H1 (cell line): ENCODE measurements at regions of chr17 and their contacts with region 1.

Region 1: DNA sequence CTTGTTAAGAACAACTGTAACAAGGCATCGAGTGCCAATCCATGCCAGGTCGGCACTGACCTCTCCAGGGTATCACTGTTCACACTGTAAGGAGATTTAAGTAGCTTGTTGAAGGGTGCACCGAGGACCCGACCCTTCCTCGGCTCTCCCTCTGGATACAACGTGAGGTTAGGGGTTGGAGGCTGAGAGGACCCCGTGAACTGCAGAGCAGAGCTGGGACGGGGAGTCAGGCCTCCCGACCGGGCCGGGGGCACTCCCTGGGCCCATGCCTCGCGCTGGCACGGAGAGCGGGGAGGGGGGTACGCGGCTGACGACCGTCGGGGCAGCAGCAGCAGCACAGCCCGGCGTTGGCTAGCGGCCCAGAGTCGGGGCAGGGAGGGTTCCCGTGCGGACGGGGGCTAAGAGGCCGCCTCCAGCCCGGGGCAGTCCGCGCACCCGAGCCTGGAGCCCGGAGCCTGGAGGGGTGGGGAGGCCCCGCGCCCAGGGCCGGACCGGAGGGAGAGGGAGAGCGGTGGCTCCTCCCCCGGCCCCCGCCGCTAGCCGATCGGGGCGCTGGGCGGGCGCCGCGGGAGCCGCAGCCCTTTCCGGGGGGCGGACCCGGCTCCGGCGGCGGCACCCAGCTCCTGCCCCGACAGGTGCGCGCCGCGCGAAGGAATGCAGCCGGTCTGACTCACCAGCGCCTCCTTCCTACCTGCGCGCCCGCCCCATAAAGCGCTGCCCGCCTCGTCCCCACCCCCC is at the start of gene ITGB4:
- DNase-seq: peak; percentile 50 to 84
- H3K4me3 ChIP-seq: peak within 1 kb of the TSS; percentile 49 to 74 (median 50)
- H3K27ac ChIP-seq: no peak within 1 kb of the TSS
- H3K4me1 ChIP-seq: peaks cover 0 to 8% (median 4%) of the 10 kb centered on the region in 4 experiments; a peak in 3 of 7 replicates
- H3K27me3 ChIP-seq: peaks cover 4 to 30% (median 17%) of the 10 kb centered on the region in 4 experiments; a peak in 6 of 7 replicates
- CTCF ChIP-seq: peak in 2 of 3 experiments; percentile 1 to 33; a peak in 2 of 4 replicates
- EP300 ChIP-seq: peak in 1 of 2 experiments; percentile 26; a peak in 1 of 3 replicates
- POLR2A ChIP-seq: peak in 1 of 2 experiments; percentile 43; a peak in 1 of 3 replicates
- RAD21 ChIP-seq: no peak
- total RNA-seq, gene ITGB4: 5.4 and 5.6 TPM in 2 replicates

Region 2: DNA sequence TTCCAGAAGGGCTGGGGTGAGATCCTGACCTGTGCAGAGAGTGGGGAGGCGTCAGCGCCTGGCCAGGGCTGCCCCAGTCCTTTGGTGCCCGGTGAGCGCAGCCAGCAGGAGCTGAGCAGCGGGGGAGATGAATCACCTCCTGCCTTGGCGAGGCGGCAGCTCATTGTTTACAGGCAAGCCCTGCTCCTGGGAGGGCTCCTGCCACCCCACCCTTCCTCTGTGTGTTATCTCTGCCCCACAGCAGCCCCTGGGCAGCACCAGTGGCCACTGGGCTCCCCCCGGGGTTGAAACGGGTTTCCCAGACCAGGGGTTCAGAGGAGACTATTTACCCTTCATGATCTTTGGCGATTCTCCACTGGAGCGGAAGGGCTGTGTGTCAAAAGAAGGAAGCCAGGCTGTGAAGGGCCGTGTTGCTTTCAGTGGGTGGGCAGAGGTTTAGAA is 13.7 kb before region 1 on chr17:
- CTCF ChIA-PET with region 1: interaction called, 8 read pairs
- POLR2A ChIA-PET with region 1: interaction called, 36 read pairs
- DNase-seq: no peak
- H3K4me3 ChIP-seq: no peak overlapping the region
- H3K27ac ChIP-seq: no peak overlapping the region
- H3K4me1 ChIP-seq: no peaks in the 10 kb centered on the region
- H3K27me3 ChIP-seq: no peaks in the 10 kb centered on the region
- CTCF ChIP-seq: no peak
- EP300 ChIP-seq: no peak
- POLR2A ChIP-seq: no peak
- RAD21 ChIP-seq: no peak

Region 3: GRCh38 chr17:75731716-75732498 is 11.0 kb after region 1 on chr17:
- CTCF ChIA-PET with region 1: interaction called, 4 read pairs
- POLR2A ChIA-PET with region 1: interaction called, 11 read pairs
- DNase-seq: no peak
- H3K4me3 ChIP-seq: no peak overlapping the region
- H3K27ac ChIP-seq: no peak overlapping the region
- H3K4me1 ChIP-seq: no peaks in the 10 kb centered on the region; a peak in 2 of 7 replicates
- H3K27me3 ChIP-seq: no peaks in the 10 kb centered on the region
- CTCF ChIP-seq: no peak
- EP300 ChIP-seq: no peak
- POLR2A ChIP-seq: no peak
- RAD21 ChIP-seq: no peak

Region 4: GRCh38 chr17:75738218-75738802 is 17.4 kb after region 1 on chr17:
- CTCF ChIA-PET with region 1: interaction called, 12 read pairs
- POLR2A ChIA-PET with region 1: interaction called, 3 read pairs
- DNase-seq: no peak
- H3K4me3 ChIP-seq: no peak overlapping the region
- H3K27ac ChIP-seq: no peak overlapping the region
- H3K4me1 ChIP-seq: no peaks in the 10 kb centered on the region
- H3K27me3 ChIP-seq: no peaks in the 10 kb centered on the region
- CTCF ChIP-seq: no peak
- EP300 ChIP-seq: no peak
- POLR2A ChIP-seq: no peak
- RAD21 ChIP-seq: no peak

Region 5: GRCh38 chr17:75808905-75809715 is 88.2 kb after region 1 on chr17:
- CTCF ChIA-PET with region 1: no interaction called
- POLR2A ChIA-PET with region 1: no interaction called
- DNase-seq: no peak
- H3K4me3 ChIP-seq: no peak overlapping the region
- H3K27ac ChIP-seq: no peak overlapping the region
- H3K4me1 ChIP-seq: no peaks in the 10 kb centered on the region
- H3K27me3 ChIP-seq: no peaks in the 10 kb centered on the region
- CTCF ChIP-seq: no peak
- EP300 ChIP-seq: no peak
- POLR2A ChIP-seq: no peak
- RAD21 ChIP-seq: no peak